A673 (cell line): ENCODE measurements at regions of chr2 and their contacts with region 1.

Region 1: GRCh38 chr2:163155279-163155883 is 316.8 kb upstream of the KCNH7 start:
- DNase-seq: peak; percentile 49
- H3K4me3 ChIP-seq: no peak overlapping the region
- H3K27ac ChIP-seq: no peak overlapping the region
- H3K4me1 ChIP-seq: no peaks in the 10 kb centered on the region
- H3K27me3 ChIP-seq: no peaks in the 10 kb centered on the region
- CTCF ChIP-seq: peak; percentile 64

Region 2: DNA sequence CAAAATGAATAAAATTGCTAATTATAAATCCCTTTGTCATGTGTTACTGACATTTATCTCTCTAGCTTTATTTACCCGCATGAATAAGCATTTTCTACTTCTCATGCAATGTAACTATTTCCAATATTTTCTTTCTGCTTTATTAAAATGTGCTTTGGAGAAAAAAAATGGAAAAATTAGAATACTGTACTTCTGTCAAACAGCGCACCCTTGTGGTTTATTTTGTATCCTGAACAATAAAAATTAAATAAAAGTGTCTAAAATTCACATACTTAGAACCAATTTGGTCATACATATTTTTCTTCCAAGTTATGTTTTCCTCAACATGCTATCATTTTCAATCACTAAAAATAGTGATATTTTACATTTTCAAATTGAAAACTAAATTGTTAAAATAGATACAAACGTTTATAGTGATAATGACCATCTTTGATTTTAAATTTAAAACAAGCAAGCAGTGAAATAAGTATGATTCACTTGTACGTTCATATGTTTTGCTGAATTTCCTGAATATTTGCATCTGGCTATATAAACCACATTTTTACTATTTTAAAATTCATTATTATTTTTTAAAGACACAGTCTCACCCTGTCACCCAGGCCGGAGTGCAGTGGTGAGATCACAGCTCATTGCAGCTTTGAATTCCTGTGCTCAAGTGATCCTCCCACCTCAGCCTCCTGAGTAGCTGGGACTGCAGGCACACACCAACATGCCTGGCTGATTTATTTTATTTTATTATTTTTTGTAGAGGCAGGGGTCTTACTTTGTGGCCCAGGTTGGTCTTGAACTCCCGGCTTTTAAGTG is 1561.8 kb after region 1 on chr2:
- CTCF ChIA-PET with region 1: no interaction called
- POLR2A ChIA-PET with region 1: no interaction called
- intact Hi-C with region 1: loop called (anchors 10 kb)
- DNase-seq: peak; percentile 64
- H3K4me3 ChIP-seq: no peak overlapping the region
- H3K27ac ChIP-seq: no peak overlapping the region
- H3K4me1 ChIP-seq: peaks cover 6% of the 10 kb centered on the region
- H3K27me3 ChIP-seq: no peaks in the 10 kb centered on the region
- CTCF ChIP-seq: peak; percentile 77